ENCODE measurements at regions of chr2 and their contacts with region 1.

Region 1: GRCh38 chr2:14915983-14916382 is 283.5 kb downstream of the LRATD1 start:
- DNase-seq: no peak
- H3K4me3 ChIP-seq: no peak overlapping the region
- H3K27ac ChIP-seq: no peak overlapping the region
- H3K4me1 ChIP-seq: no peaks in the 10 kb centered on the region
- H3K27me3 ChIP-seq: no peaks in the 10 kb centered on the region
- CTCF ChIP-seq: no peak
- EP300 ChIP-seq: no peak
- POLR2A ChIP-seq: no peak

Region 2: DNA sequence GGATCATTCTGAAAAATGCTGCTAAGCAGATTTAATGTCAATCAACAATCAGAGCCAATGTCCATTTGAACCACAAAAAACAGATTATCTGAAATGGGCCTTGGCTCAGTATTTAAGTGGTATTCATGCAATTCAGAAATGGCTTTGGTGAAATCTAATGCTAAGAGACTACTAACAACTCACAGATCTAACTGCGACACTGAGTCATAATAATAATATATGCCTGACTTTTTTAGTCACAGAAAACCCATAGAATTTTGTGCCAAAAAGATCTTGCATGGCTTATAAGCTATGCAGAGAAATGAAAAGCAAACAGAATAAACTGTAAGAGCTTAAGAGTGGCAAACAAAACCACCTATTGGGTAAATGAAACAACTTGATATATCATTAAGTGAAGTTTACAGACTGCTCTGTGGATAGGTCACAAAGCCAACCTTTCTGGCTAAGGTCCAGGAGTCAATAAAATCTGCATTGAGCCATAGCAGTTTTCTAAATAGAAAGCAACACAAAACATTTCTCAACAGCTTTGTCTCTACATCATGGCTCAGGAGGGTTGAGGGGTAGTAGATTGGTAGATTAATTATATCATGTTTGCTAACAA is 49.1 kb before region 1 on chr2:
- in situ Hi-C with region 1: no loop called
- intact Hi-C with region 1: no loop called
- DNase-seq: no peak
- H3K4me3 ChIP-seq: no peak overlapping the region
- H3K27ac ChIP-seq: no peak overlapping the region
- H3K4me1 ChIP-seq: peaks cover 0 to 9% (median 3%) of the 10 kb centered on the region in 4 donors
- H3K27me3 ChIP-seq: no peaks in the 10 kb centered on the region
- CTCF ChIP-seq: no peak
- EP300 ChIP-seq: no peak
- POLR2A ChIP-seq: no peak

Region 3: DNA sequence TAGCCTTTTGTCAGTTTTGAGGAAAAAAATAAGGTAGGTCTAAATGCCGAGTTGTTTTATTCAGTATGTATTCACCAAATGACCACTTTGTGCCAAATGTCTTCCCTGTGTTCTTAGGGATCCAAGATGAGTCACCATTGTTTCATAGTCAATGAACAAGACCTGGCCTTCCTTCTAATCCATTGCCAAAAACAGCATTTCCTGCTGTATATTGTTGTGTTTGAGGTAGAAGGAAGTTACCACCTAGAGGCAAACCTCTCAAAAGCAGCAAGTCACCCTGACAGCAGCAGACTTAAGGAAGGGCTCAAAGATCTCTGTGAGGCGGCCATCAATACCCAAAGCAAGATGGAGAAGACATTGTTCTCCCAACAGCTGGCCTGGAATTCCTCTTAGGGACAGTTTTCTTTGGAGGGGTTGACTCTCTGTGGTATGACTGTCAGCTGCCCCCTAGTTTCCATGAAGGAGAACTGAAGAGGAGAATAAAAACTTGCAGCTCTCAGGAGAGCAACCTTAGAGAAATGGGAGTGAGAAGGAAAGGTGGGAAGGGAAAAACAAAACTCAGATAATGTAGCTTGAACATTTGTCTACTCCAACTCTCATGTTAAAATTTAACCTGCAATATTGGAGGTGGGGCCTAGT is 44.8 kb after region 1 on chr2:
- in situ Hi-C with region 1: no loop called
- intact Hi-C with region 1: loop called (anchors 1 kb)
- DNase-seq: no peak
- H3K4me3 ChIP-seq: no peak overlapping the region
- H3K27ac ChIP-seq: no peak overlapping the region
- H3K4me1 ChIP-seq: no peaks in the 10 kb centered on the region
- H3K27me3 ChIP-seq: no peaks in the 10 kb centered on the region
- CTCF ChIP-seq: no peak
- EP300 ChIP-seq: no peak
- POLR2A ChIP-seq: no peak